ENCODE measurements at regions of chr17 and their contacts with region 1.

Region 1: DNA sequence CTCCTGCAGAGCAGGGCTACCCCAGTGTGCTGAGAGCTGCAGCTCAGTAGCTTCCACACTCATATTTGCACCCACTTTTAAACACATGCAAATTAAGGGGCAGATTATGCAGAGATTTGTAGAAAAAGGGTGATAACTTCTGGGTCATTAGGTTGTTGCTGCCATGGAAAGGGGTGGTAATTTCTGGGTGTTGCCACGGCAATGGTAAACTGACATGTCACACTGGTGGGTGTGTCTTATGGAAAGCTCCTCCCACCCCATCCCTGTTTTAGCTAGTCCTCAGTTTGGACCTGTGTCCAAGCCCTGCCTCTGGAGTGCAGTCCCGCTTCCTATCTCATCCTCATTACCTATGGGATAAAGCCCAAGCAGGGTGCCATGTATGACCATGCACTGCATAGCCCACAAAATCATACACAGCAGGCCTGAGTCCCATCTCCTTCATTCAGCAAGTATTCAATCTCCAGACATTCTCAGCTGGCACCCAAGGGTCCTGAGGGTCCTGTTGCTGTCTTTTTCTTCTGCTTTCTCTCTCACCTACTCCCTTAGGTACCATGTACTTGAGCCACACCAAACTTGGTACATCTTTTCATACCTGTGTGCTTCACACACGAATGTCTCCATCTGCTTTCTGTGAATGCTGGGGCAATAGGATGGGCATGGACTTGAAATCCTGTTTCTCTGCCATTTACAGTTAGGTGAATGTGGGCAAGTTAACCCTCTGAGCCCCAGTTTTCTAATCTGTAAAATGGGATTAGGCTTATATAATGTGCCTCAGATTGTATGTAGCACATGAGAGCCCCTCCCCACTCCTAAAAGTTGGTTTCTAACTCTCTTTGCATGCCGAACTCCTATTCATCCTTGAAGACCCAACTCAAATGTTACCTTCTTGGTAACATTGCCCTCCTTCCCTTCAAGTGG is 28.6 kb downstream of the TNS4 start:
- DNase-seq: peak; percentile 85
- H3K4me3 ChIP-seq: no peak overlapping the region
- H3K27ac ChIP-seq: peak overlapping the region; percentile 23
- H3K4me1 ChIP-seq: peaks cover 15% of the 10 kb centered on the region
- H3K27me3 ChIP-seq: no peaks in the 10 kb centered on the region
- CTCF ChIP-seq: no peak

Region 2: GRCh38 chr17:40437095-40437732 is 35.6 kb before region 1 on chr17:
- CTCF ChIA-PET with region 1: interaction called, 5 read pairs
- dilution Hi-C with region 1: no loop called
- in situ Hi-C with region 1: no loop called
- intact Hi-C with region 1: loop called (anchors 1 kb)
- DNase-seq: no peak
- H3K4me3 ChIP-seq: no peak overlapping the region
- H3K27ac ChIP-seq: no peak overlapping the region
- H3K4me1 ChIP-seq: peaks cover 5% of the 10 kb centered on the region
- H3K27me3 ChIP-seq: no peaks in the 10 kb centered on the region
- CTCF ChIP-seq: no peak

Region 3: DNA sequence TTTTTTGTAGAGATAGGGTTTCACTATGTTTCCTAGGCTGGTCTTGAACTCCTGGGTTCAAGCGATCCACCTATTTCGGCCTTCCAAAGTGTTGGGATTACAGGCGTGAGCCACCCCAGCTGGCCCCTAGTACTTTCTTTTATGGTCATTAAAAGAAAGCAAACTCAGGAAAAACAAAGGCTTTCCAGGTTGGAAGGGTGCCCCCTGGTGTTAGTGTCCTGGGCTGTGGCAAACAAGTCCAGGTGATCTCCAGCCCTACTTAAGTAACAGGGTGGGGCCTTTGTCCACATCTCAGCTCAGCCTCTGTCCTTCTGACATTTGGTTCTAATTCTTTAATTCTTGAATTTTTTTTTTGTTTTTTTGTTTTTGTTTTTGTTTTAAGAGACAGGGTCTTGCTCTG is 22.6 kb before region 1 on chr17:
- CTCF ChIA-PET with region 1: no interaction called
- dilution Hi-C with region 1: no loop called
- in situ Hi-C with region 1: no loop called
- intact Hi-C with region 1: loop called (anchors 2 kb)
- DNase-seq: peak; percentile 39
- H3K4me3 ChIP-seq: no peak overlapping the region
- H3K27ac ChIP-seq: no peak overlapping the region
- H3K4me1 ChIP-seq: peaks cover 16% of the 10 kb centered on the region
- H3K27me3 ChIP-seq: no peaks in the 10 kb centered on the region
- CTCF ChIP-seq: peak; percentile 62 to 67

Region 4: GRCh38 chr17:40461732-40462342 is 11.0 kb before region 1 on chr17:
- CTCF ChIA-PET with region 1: no interaction called
- dilution Hi-C with region 1: no loop called
- in situ Hi-C with region 1: no loop called
- intact Hi-C with region 1: no loop called
- DNase-seq: no peak
- H3K4me3 ChIP-seq: no peak overlapping the region
- H3K27ac ChIP-seq: no peak overlapping the region
- H3K4me1 ChIP-seq: peaks cover 11% of the 10 kb centered on the region
- H3K27me3 ChIP-seq: no peaks in the 10 kb centered on the region
- CTCF ChIP-seq: no peak

Region 5: GRCh38 chr17:41131979-41132378 is 659.2 kb after region 1 on chr17:
- CTCF ChIA-PET with region 1: interaction called, 12 read pairs
- dilution Hi-C with region 1: no loop called
- in situ Hi-C with region 1: no loop called
- intact Hi-C with region 1: no loop called
- DNase-seq: peak; percentile 83
- H3K4me3 ChIP-seq: no peak overlapping the region
- H3K27ac ChIP-seq: peak overlapping the region; percentile 68
- H3K4me1 ChIP-seq: peaks cover 16% of the 10 kb centered on the region
- H3K27me3 ChIP-seq: no peaks in the 10 kb centered on the region
- CTCF ChIP-seq: no peak

Measured in mammary epithelial cell (primary cell).